Activated CD4-positive, alpha-beta memory T cell treated with anti-CD3 and anti-CD28 coated beads for 36 hours (primary cell): ENCODE measurements at regions of chr21 and their contacts with region 1.

Region 1: DNA sequence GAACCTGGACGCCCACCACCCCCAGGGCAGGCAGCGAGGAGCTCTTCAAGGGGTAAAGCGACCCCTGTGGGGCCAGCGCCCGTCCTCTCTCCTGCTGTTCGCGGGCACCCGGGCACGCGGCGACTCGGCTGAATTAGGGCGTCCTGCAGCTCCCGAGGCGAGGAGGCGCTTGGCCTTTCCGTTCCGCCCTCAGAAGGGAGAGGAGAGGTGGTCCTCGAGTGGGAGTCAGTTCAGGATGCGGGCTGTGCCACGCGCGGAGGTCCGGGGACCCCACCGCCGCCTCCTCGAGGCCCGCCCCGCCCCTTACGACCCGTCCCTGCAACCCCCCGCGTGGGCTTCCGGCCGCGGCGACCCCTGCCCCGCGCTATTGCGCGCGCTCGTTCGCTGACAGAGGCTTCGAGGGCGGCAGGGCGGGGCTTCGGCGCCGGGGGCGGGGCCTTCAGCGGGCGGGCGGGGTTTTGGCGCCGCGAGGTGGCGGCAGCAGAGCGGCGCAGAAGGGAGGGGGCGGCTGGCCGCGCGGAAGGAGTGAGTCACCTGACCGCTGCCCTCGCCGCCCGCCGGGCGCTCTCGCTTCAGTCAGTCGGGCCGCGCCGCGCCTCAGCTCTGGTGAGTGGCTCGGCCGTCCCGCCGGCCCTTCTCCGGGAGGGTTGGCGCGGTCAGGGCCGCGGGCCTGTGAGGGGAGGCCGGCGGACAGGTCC is at the start of gene BACH1:
- DNase-seq: peak; percentile 93
- H3K4me3 Mint-ChIP-seq: peak within 1 kb of the TSS; percentile 85
- H3K27ac Mint-ChIP-seq: peak within 1 kb of the TSS; percentile 89
- H3K4me1 Mint-ChIP-seq: peaks cover 64% of the 10 kb centered on the region
- H3K27me3 Mint-ChIP-seq: no peaks in the 10 kb centered on the region
- total RNA-seq, gene BACH1: 22.9 to 23.0 TPM

Region 2: GRCh38 chr21:28832013-28832714 is 466.3 kb before region 1 on chr21:
- CTCF ChIA-PET with region 1: no interaction called
- POLR2A ChIA-PET with region 1: no interaction called
- intact Hi-C with region 1: loop called (anchors 10 kb)
- DNase-seq: no peak
- H3K4me3 Mint-ChIP-seq: no peak overlapping the region
- H3K27ac Mint-ChIP-seq: peak overlapping the region; percentile 63
- H3K4me1 Mint-ChIP-seq: peaks cover 57% of the 10 kb centered on the region
- H3K27me3 Mint-ChIP-seq: no peaks in the 10 kb centered on the region

Region 3: GRCh38 chr21:29024474-29025327 is 273.8 kb before region 1 on chr21 and contains the start of gene USP16:
- CTCF ChIA-PET with region 1: no interaction called
- POLR2A ChIA-PET with region 1: interaction called, 3 read pairs
- intact Hi-C with region 1: loop called (anchors 1 kb)
- DNase-seq: peak; percentile 96
- H3K4me3 Mint-ChIP-seq: peak within 1 kb of the TSS; percentile 100
- H3K27ac Mint-ChIP-seq: peak within 1 kb of the TSS; percentile 100
- H3K4me1 Mint-ChIP-seq: peaks cover 50% of the 10 kb centered on the region
- H3K27me3 Mint-ChIP-seq: no peaks in the 10 kb centered on the region
- total RNA-seq, gene USP16: 39.3 to 42.1 TPM

Region 4: GRCh38 chr21:29091032-29091431 is 207.5 kb before region 1 on chr21:
- CTCF ChIA-PET with region 1: interaction called, 4 read pairs
- POLR2A ChIA-PET with region 1: interaction called, 3 read pairs
- intact Hi-C with region 1: loop called (anchors 1 kb)
- DNase-seq: no peak
- H3K4me3 Mint-ChIP-seq: no peak overlapping the region
- H3K27ac Mint-ChIP-seq: peak overlapping the region; percentile 38
- H3K4me1 Mint-ChIP-seq: peaks cover 15% of the 10 kb centered on the region
- H3K27me3 Mint-ChIP-seq: no peaks in the 10 kb centered on the region

Region 5: GRCh38 chr21:29114765-29115164 is 183.7 kb before region 1 on chr21:
- CTCF ChIA-PET with region 1: no interaction called
- POLR2A ChIA-PET with region 1: no interaction called
- intact Hi-C with region 1: no loop called
- DNase-seq: no peak
- H3K4me3 Mint-ChIP-seq: no peak overlapping the region
- H3K27ac Mint-ChIP-seq: no peak overlapping the region
- H3K4me1 Mint-ChIP-seq: no peaks in the 10 kb centered on the region
- H3K27me3 Mint-ChIP-seq: no peaks in the 10 kb centered on the region

Region 6: DNA sequence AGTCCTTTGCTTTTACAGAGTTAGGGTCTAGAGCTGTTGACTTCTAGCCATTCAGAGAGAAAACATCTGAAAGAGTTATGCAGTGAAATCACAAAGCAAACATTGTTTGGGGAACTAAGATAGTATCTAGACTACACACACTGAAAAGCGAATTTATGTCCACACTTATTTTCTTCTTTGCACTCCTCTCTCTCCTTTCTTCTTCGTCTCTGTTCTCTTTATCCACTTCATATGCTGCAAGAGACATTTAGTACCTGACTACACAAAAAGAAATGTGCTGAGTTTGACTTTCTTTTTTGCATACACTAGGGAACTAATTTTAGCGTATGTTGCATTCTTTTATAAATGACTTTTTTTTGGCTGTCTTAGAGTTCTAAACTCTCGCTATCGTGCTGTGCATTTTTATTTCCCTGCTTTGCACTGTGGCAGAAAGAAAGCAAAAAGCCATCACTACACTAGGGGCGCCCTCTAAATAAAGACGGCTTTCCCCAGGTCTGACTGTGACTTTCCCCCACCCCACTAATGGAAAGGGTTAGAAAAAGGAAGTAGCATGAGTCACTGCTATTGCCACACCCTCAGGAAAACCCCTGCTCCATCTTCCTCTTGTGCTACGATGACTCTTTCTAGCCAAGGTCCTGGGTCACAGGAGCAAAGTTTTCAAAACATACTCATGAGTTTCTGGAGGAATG is 102.4 kb before region 1 on chr21:
- CTCF ChIA-PET with region 1: interaction called, 4 read pairs
- POLR2A ChIA-PET with region 1: interaction called, 4 read pairs
- intact Hi-C with region 1: loop called (anchors 1 kb)
- DNase-seq: peak; percentile 85
- H3K4me3 Mint-ChIP-seq: peak overlapping the region; percentile 70
- H3K27ac Mint-ChIP-seq: peak overlapping the region; percentile 80
- H3K4me1 Mint-ChIP-seq: peaks cover 34% of the 10 kb centered on the region
- H3K27me3 Mint-ChIP-seq: peaks cover 3% of the 10 kb centered on the region

Region 7: GRCh38 chr21:29342363-29342957 is 44.0 kb after region 1 on chr21:
- CTCF ChIA-PET with region 1: interaction called, 20 read pairs
- POLR2A ChIA-PET with region 1: interaction called, 13 read pairs
- intact Hi-C with region 1: loop called (anchors 1 kb)
- DNase-seq: peak; percentile 84
- H3K4me3 Mint-ChIP-seq: peak overlapping the region; percentile 53
- H3K27ac Mint-ChIP-seq: peak overlapping the region; percentile 84
- H3K4me1 Mint-ChIP-seq: peaks cover 34% of the 10 kb centered on the region
- H3K27me3 Mint-ChIP-seq: no peaks in the 10 kb centered on the region

Region 8: DNA sequence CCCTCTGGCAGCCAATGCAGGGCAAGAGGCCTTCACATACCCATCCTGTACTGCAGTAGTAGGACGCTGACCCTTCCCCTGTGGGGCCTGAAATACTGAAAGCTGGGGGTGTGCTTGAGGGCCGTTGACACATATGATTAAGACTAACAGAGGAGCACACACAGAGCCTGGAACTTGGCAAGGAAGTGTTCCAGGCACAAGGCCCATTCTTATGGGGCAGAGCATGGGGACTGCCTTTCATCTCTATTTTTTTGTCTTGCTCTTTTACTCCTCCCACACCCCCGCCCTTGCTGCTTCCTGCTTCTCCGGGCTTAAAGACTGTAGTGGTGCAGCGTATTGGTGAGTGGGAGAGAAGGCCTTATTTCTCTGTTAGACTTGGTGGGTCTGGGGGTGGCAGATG is 137.6 kb after region 1 on chr21:
- CTCF ChIA-PET with region 1: no interaction called
- POLR2A ChIA-PET with region 1: no interaction called
- intact Hi-C with region 1: loop called (anchors 5 kb)
- DNase-seq: peak; percentile 65
- H3K4me3 Mint-ChIP-seq: peak overlapping the region; percentile 64
- H3K27ac Mint-ChIP-seq: peak overlapping the region; percentile 80
- H3K4me1 Mint-ChIP-seq: peaks cover 36% of the 10 kb centered on the region
- H3K27me3 Mint-ChIP-seq: no peaks in the 10 kb centered on the region